ENCODE measurements at regions of chr6 and their contacts with region 1.

Region 1: DNA sequence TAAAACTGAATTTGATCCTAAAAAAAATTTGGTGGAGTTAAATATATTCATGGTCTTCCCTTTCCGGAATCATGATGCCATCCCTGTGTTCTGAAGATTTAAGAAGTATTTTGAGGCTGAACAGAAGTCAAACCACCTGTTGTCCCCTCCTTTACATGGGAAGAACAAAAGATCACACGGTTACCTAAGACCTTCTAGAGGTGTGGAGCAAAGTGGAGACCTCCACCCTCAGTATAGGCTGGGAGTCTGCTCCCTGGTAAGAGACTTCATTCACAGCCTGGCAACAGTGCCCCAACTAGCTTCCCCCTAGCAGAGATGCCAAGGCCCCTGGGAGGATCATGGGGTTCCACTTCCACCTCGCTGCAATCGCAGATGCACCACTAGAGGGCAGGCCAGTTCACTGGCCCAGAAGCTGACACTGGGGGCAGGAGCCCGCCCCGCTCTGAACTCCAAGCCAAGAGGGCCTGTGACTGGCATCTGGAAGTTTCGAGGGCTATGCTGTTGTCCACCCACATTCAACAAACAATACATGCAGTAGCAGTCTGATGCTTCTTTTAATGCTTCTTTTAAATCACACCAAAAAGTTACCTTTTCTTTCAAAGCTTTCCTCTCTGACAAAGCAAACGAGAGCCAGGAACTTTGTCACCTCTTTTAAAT is 19.5 kb upstream of the UBE2J1 start:
- DNase-seq: peak; percentile 77
- H3K4me3 ChIP-seq: no peak overlapping the region
- H3K27ac ChIP-seq: no peak overlapping the region
- H3K4me1 ChIP-seq: peaks cover 0 to 21% (median 11%) of the 10 kb centered on the region in 4 donors
- H3K27me3 ChIP-seq: no peaks in the 10 kb centered on the region
- CTCF ChIP-seq: peak; percentile 51 to 95 (median 72)
- EP300 ChIP-seq: no peak
- POLR2A ChIP-seq: no peak

Region 2: DNA sequence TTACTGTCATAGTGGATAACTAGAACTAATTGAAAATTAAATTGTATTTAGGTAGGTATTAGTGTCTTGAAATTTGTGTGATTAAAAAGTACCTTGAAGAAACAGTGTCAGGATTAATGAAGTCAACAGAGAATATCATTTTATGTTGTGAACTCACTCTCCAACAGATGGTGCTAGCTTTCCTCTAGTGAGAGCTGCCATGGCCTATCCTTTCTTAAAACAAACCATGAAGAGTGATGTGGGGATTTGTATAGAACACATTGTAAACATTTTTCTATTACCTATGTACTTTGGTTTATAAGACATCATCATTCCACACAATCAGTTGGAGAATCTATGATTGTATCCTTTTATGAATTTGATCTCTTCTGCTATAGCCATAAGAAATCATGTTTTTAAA is 249.4 kb before region 1 on chr6:
- intact Hi-C with region 1: loop called (anchors 5 kb)
- DNase-seq: no peak
- H3K4me3 ChIP-seq: no peak overlapping the region
- H3K27ac ChIP-seq: peak overlapping the region in 1 of 4 donors; percentile 28
- H3K4me1 ChIP-seq: peaks cover 0 to 8% (median 3%) of the 10 kb centered on the region in 4 donors
- H3K27me3 ChIP-seq: no peaks in the 10 kb centered on the region
- CTCF ChIP-seq: peak in 3 of 4 experiments; percentile 20 to 56 (median 34)
- EP300 ChIP-seq: no peak
- POLR2A ChIP-seq: no peak

Region 3: DNA sequence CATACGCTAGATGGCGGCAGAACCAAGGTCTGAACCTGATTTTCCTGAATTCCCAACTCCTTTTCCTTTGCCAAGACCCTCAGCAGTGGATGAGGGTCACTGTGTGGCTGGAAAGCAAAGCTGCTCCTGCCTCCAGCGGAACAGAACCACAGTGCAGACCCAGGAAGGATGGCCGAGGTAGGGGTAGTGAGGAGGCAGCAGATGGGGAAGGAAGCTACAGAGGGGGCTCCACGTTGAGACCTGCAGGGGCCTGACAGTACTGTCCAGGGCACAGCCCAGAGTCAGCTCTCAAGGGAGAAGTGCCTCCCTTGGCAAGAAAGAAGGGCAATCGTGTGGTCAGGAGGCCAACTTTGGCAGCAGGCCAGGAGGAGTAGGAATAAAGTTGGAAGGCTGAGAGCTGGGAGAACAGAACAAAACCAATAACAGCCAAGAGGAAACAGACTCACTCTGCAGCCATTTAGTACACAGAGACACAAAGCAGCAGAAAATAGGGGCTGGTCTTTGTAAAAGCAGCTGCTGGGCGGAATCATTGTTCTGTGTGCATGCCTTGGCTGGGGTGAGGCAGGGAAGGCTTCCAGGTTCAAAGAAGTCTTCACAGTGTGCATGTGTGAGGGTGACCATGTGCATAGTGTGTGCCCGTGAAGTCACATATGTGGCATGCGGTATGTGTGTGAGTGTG is 60.0 kb before region 1 on chr6:
- intact Hi-C with region 1: loop called (anchors 5 kb)
- DNase-seq: peak; percentile 86
- H3K4me3 ChIP-seq: peak overlapping the region in 3 of 4 donors; percentile 9 to 13 (median 9)
- H3K27ac ChIP-seq: peak overlapping the region; percentile 24 to 73 (median 66)
- H3K4me1 ChIP-seq: peaks cover 0 to 25% (median 23%) of the 10 kb centered on the region in 4 donors
- H3K27me3 ChIP-seq: no peaks in the 10 kb centered on the region
- CTCF ChIP-seq: peak in 2 of 4 experiments; percentile 45 to 53
- EP300 ChIP-seq: no peak
- POLR2A ChIP-seq: no peak

Region 4: DNA sequence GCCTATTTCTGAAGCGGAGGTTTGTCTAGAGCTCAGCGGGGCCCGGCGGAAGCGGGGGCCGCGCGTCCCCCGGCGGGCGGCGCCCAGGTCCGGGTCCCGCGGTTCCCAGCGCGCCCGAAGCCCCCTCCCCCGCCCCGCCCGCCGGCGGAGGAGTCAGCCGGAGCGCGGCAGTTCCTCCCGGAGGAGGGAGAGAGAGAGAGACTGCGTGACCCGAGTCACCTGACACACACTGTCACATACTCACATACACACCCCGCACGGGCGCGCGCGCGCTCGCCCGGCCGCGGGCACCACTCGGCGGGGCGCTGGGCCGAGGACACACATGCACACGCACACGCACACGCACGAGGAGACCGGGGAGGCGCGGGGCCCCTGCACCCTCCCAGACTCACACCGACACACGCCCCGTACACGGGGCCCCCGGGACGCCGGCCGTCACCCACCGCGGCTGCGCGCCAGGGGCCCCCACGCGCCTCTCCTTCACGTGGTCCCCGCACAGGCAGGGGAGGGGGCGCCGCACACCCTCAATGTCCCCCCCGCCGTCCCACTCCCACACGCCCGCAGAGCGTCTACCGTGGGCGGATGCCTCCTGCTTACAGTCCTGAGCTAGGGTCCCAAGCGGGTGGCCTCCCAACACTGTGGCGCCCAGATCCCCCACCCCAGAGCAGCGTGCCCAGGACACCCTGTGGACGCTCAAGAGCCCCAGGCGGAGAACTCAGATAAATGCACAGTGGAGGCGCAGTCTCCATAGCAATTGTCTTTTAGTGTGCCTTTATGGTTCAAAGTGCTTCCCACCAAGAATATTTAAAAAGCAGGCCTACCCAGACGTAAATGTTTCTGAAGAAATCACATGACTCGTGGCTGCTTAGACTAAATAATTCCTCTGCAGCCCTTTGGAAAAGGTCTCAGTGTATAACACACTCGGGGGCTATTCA is 40.4 kb after region 1 on chr6 and contains the start of gene RRAGD:
- intact Hi-C with region 1: loop called (anchors 5 kb)
- DNase-seq: peak; percentile 86
- H3K4me3 ChIP-seq: peak within 1 kb of the TSS; percentile 81 to 91 (median 84)
- H3K27ac ChIP-seq: peak within 1 kb of the TSS; percentile 64 to 77 (median 73)
- H3K4me1 ChIP-seq: peaks cover 0 to 23% (median 12%) of the 10 kb centered on the region in 4 donors
- H3K27me3 ChIP-seq: no peaks in the 10 kb centered on the region
- CTCF ChIP-seq: no peak
- EP300 ChIP-seq: peak in 1 of 4 donors; percentile 23
- POLR2A ChIP-seq: no peak
- total RNA-seq, gene RRAGD: 11.8 to 19.8 (median 13.3) TPM

Region 5: DNA sequence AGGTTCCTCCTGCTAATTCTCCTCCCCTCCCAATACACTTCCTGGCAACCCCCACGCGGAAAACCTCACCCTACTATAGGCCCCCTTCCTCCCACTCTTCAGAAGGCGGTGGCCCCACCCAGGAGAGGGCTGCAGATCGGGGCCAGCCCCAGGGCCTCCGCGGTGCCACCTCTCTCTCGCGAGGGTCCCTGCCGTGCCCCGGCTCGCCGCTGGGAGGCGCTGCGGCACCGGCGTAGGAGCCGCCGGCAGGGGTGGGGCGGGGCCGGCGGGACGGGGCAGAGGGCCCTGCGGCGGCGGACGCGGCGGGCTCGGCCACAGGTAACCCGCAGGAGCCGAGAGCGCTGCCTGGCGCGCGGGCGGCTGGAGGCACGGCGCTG is 60.9 kb after region 1 on chr6 and contains the start of gene ANKRD6:
- intact Hi-C with region 1: loop called (anchors 5 kb)
- DNase-seq: peak; percentile 83
- H3K4me3 ChIP-seq: peak within 1 kb of the TSS; percentile 90 to 99 (median 92)
- H3K27ac ChIP-seq: peak within 1 kb of the TSS in 2 of 4 donors; percentile 49 to 62
- H3K4me1 ChIP-seq: peaks cover 0 to 27% (median 10%) of the 10 kb centered on the region in 4 donors
- H3K27me3 ChIP-seq: no peaks in the 10 kb centered on the region
- CTCF ChIP-seq: peak; percentile 44 to 85 (median 64)
- EP300 ChIP-seq: no peak
- POLR2A ChIP-seq: no peak
- total RNA-seq, gene ANKRD6: 8.0 to 21.6 (median 17.3) TPM

Region 6: GRCh38 chr6:89610149-89610642 is 238.2 kb after region 1 on chr6:
- intact Hi-C with region 1: loop called (anchors 5 kb)
- DNase-seq: peak; percentile 79
- H3K4me3 ChIP-seq: no peak overlapping the region
- H3K27ac ChIP-seq: no peak overlapping the region
- H3K4me1 ChIP-seq: no peaks in the 10 kb centered on the region
- H3K27me3 ChIP-seq: no peaks in the 10 kb centered on the region
- CTCF ChIP-seq: peak; percentile 58 to 86 (median 64)
- EP300 ChIP-seq: no peak
- POLR2A ChIP-seq: no peak

Measured in sigmoid colon (tissue), 7 donors.